Colonic mucosa (tissue), 4 donors: ENCODE measurements at regions of chr19 and their contacts with region 1.

Region 1: DNA sequence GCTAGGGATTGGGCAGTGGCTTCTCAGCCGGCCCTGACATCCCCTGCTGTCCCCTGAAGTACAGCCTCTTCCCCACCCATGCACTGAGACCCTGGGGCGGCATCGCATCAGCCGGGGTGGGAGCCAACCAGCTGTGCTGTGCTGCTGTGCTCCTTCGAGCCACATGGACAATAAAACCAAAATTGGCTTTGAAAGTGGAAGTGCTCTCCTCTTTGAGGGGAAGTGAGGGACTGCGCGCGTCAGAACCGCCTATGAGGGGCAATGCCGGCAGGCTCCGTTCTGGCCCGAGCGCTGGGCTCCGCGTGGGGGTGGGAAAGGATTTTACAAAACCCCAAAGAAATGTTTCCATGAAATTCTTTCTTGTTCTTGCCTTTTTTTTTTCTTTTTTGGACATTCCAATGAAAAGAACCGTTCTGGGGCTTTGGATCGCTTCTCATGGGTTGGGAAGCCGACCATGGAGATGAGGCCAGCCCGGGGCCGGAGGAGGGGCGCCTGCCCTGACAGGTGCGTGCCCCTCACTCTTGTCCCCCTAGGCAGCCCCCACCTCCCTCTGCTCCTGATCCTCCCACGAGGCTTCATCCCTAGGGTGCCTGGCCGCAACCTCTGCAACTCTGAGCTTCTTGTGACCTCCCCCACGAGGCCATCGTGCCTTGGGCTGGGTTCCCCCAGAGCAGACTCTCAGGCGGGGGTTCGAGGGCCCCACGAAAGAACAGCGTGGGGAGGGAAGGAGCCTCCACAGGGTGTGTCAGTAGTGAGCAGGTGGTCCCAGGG is 22.6 kb downstream of the KLHL26 start:
- DNase-seq: no peak
- H3K4me3 ChIP-seq: no peak overlapping the region
- H3K27ac ChIP-seq: no peak overlapping the region
- H3K4me1 ChIP-seq: no peaks in the 10 kb centered on the region
- H3K27me3 ChIP-seq: no peaks in the 10 kb centered on the region
- CTCF ChIP-seq: no peak

Region 2: GRCh38 chr19:18469069-18469846 is 190.2 kb before region 1 on chr19:
- intact Hi-C with region 1: loop called (anchors 10 kb)
- DNase-seq: peak; percentile 73
- H3K4me3 ChIP-seq: no peak overlapping the region
- H3K27ac ChIP-seq: no peak overlapping the region
- H3K4me1 ChIP-seq: peaks cover 19% of the 10 kb centered on the region
- H3K27me3 ChIP-seq: no peaks in the 10 kb centered on the region
- CTCF ChIP-seq: peak; percentile 84

Region 3: GRCh38 chr19:18586306-18586705 is 73.2 kb before region 1 on chr19:
- intact Hi-C with region 1: no loop called
- DNase-seq: no peak
- H3K4me3 ChIP-seq: no peak overlapping the region
- H3K27ac ChIP-seq: no peak overlapping the region
- H3K4me1 ChIP-seq: peaks cover 8% of the 10 kb centered on the region
- H3K27me3 ChIP-seq: no peaks in the 10 kb centered on the region
- CTCF ChIP-seq: no peak